Activated CD8-positive, alpha-beta T cell treated with anti-CD3 and anti-CD28 coated beads for 36 hours (primary cell): ENCODE measurements at regions of chr1 and their contacts with region 1.

Region 1: GRCh38 chr1:157369808-157370521 is 182.3 kb downstream of the FCRL5 start:
- DNase-seq: peak; percentile 53
- ATAC-seq: no peak
- H3K4me3 Mint-ChIP-seq: no peak overlapping the region
- H3K27ac Mint-ChIP-seq: no peak overlapping the region
- H3K4me1 Mint-ChIP-seq: no peaks in the 10 kb centered on the region
- H3K27me3 Mint-ChIP-seq: peaks cover 9% of the 10 kb centered on the region
- CTCF ChIP-seq: peak; percentile 87

Region 2: GRCh38 chr1:157325220-157325619 is 44.7 kb before region 1 on chr1:
- CTCF ChIA-PET with region 1: no interaction called
- POLR2A ChIA-PET with region 1: no interaction called
- intact Hi-C with region 1: no loop called
- DNase-seq: no peak
- ATAC-seq: no peak
- H3K4me3 Mint-ChIP-seq: no peak overlapping the region
- H3K27ac Mint-ChIP-seq: no peak overlapping the region
- H3K4me1 Mint-ChIP-seq: no peaks in the 10 kb centered on the region
- H3K27me3 Mint-ChIP-seq: peaks cover 9% of the 10 kb centered on the region
- CTCF ChIP-seq: no peak

Region 3: GRCh38 chr1:157357111-157357510 is 12.9 kb before region 1 on chr1:
- CTCF ChIA-PET with region 1: interaction called, 12 read pairs
- POLR2A ChIA-PET with region 1: no interaction called
- intact Hi-C with region 1: no loop called
- DNase-seq: no peak
- ATAC-seq: no peak
- H3K4me3 Mint-ChIP-seq: no peak overlapping the region
- H3K27ac Mint-ChIP-seq: no peak overlapping the region
- H3K4me1 Mint-ChIP-seq: no peaks in the 10 kb centered on the region
- H3K27me3 Mint-ChIP-seq: peaks cover 2% of the 10 kb centered on the region
- CTCF ChIP-seq: no peak

Region 4: DNA sequence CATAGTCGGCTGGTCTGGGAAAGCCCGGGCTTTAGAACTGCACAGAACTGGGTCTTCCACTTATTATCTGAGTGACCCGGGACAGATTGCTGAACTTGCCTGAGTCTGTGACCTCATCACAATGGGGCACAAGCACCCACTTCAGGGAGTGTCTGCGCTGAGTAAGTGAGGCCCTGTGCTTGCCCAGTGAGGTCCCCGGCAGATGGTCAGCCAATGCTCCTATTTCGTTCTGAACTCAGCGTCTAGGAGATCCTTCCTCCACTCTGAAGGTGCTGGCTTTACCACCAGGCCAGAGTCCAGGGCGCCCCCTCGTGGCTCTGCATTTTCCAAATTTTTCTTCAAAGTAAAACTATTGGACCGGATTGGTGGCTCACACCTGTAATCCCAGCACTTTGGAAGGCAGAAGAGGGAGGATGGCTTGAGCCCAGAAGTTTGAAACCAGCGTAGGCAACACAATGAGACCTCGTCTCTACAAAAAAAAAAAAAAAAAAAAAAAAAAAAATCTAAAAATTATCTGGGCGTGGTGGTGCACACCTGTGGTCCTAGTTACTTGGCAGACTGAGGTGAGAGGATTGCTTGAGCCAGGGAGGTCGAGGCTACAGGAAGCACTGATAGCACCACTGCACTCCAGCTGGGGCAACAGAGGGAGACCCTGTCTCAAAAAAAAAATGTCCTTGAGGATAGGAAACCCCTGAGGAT is 120.7 kb after region 1 on chr1:
- CTCF ChIA-PET with region 1: interaction called, 29 read pairs
- POLR2A ChIA-PET with region 1: no interaction called
- intact Hi-C with region 1: no loop called
- DNase-seq: peak; percentile 85
- ATAC-seq: peak; percentile 53
- H3K4me3 Mint-ChIP-seq: no peak overlapping the region
- H3K27ac Mint-ChIP-seq: no peak overlapping the region
- H3K4me1 Mint-ChIP-seq: no peaks in the 10 kb centered on the region
- H3K27me3 Mint-ChIP-seq: peaks cover 14% of the 10 kb centered on the region
- CTCF ChIP-seq: peak; percentile 71

Region 5: GRCh38 chr1:157496121-157496526 is 126.2 kb after region 1 on chr1:
- CTCF ChIA-PET with region 1: interaction called, 29 read pairs
- POLR2A ChIA-PET with region 1: no interaction called
- intact Hi-C with region 1: no loop called
- DNase-seq: peak; percentile 58
- ATAC-seq: peak; percentile 76
- H3K4me3 Mint-ChIP-seq: no peak overlapping the region
- H3K27ac Mint-ChIP-seq: no peak overlapping the region
- H3K4me1 Mint-ChIP-seq: no peaks in the 10 kb centered on the region
- H3K27me3 Mint-ChIP-seq: peaks cover 19% of the 10 kb centered on the region
- CTCF ChIP-seq: peak; percentile 93

Region 6: GRCh38 chr1:157505481-157506272 is 135.7 kb after region 1 on chr1:
- CTCF ChIA-PET with region 1: interaction called, 10 read pairs
- POLR2A ChIA-PET with region 1: no interaction called
- intact Hi-C with region 1: no loop called
- DNase-seq: peak; percentile 51
- ATAC-seq: peak; percentile 80
- H3K4me3 Mint-ChIP-seq: no peak overlapping the region
- H3K27ac Mint-ChIP-seq: no peak overlapping the region
- H3K4me1 Mint-ChIP-seq: no peaks in the 10 kb centered on the region
- H3K27me3 Mint-ChIP-seq: peaks cover 11% of the 10 kb centered on the region
- CTCF ChIP-seq: peak; percentile 54